CD4-positive, alpha-beta memory T cell (primary cell): ENCODE measurements at regions of chr14 and their contacts with region 1.

Region 1: GRCh38 chr14:54440873-54441868 is at the start of gene CNIH1:
- DNase-seq: peak; percentile 88 to 96 (median 93)
- H3K4me3 ChIP-seq: peak within 1 kb of the TSS; percentile 45 to 61
- H3K4me3 Mint-ChIP-seq: peak within 1 kb of the TSS; percentile 83 to 95 (median 92)
- H3K27ac ChIP-seq: peak within 1 kb of the TSS; percentile 55
- H3K27ac Mint-ChIP-seq: peak within 1 kb of the TSS; percentile 88 to 98 (median 94)
- H3K4me1 ChIP-seq: peaks cover 49% of the 10 kb centered on the region
- H3K4me1 Mint-ChIP-seq: peaks cover 29 to 55% (median 36%) of the 10 kb centered on the region in 4 donors
- H3K27me3 ChIP-seq: no peaks in the 10 kb centered on the region
- H3K27me3 Mint-ChIP-seq: peaks cover 1 to 2% of the 10 kb centered on the region in 2 donors
- total RNA-seq, gene CNIH1: 46.9 to 54.2 TPM

Region 2: GRCh38 chr14:53953002-53953827 is 488.0 kb before region 1 on chr14:
- CTCF ChIA-PET with region 1: no interaction called
- POLR2A ChIA-PET with region 1: no interaction called
- intact Hi-C with region 1: loop called (anchors 5 kb)
- DNase-seq: peak in 1 of 5 donors; percentile 14
- H3K4me3 ChIP-seq: peak overlapping the region in 1 of 2 donors; percentile 37
- H3K4me3 Mint-ChIP-seq: peak overlapping the region; percentile 77 to 90 (median 86)
- H3K27ac ChIP-seq: no peak overlapping the region
- H3K27ac Mint-ChIP-seq: no peak overlapping the region
- H3K4me1 ChIP-seq: peaks cover 33% of the 10 kb centered on the region
- H3K4me1 Mint-ChIP-seq: peaks cover 8 to 47% (median 23%) of the 10 kb centered on the region in 4 donors
- H3K27me3 ChIP-seq: peaks cover 8% of the 10 kb centered on the region
- H3K27me3 Mint-ChIP-seq: peaks cover 31 to 44% of the 10 kb centered on the region in 2 donors

Region 3: GRCh38 chr14:54366736-54367735 is 74.1 kb before region 1 on chr14:
- CTCF ChIA-PET with region 1: no interaction called
- POLR2A ChIA-PET with region 1: no interaction called
- intact Hi-C with region 1: loop called (anchors 1 kb)
- DNase-seq: peak; percentile 12 to 43 (median 22)
- H3K4me3 ChIP-seq: no peak overlapping the region
- H3K4me3 Mint-ChIP-seq: no peak overlapping the region
- H3K27ac ChIP-seq: no peak overlapping the region
- H3K27ac Mint-ChIP-seq: no peak overlapping the region
- H3K4me1 ChIP-seq: no peaks in the 10 kb centered on the region
- H3K4me1 Mint-ChIP-seq: no peaks in the 10 kb centered on the region
- H3K27me3 ChIP-seq: no peaks in the 10 kb centered on the region
- H3K27me3 Mint-ChIP-seq: peaks cover 11 to 15% of the 10 kb centered on the region in 2 donors

Region 4: DNA sequence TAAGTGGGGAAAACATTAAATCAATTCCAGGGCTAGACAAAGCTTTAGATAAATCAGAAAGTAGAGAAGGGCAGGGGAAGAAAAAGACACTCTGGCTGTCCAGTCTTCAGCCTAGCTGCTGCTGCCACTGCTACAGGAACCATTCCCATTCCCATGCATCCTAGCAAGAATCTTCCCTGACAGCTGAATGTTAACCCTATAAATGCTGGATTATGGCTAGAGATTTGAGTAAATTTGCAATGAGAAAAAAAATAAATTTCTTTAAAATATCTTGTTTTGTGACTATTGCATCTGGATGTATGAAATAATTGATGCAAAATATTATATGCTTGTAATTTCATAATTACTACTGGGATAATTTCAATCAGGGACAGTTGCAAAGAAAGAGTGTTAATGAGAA is 59.4 kb before region 1 on chr14:
- CTCF ChIA-PET with region 1: no interaction called
- POLR2A ChIA-PET with region 1: no interaction called
- intact Hi-C with region 1: no loop called
- DNase-seq: no peak
- H3K4me3 ChIP-seq: no peak overlapping the region
- H3K4me3 Mint-ChIP-seq: no peak overlapping the region
- H3K27ac ChIP-seq: no peak overlapping the region
- H3K27ac Mint-ChIP-seq: no peak overlapping the region
- H3K4me1 ChIP-seq: no peaks in the 10 kb centered on the region
- H3K4me1 Mint-ChIP-seq: no peaks in the 10 kb centered on the region
- H3K27me3 ChIP-seq: no peaks in the 10 kb centered on the region
- H3K27me3 Mint-ChIP-seq: peaks cover 7 to 24% of the 10 kb centered on the region in 2 donors

Region 5: DNA sequence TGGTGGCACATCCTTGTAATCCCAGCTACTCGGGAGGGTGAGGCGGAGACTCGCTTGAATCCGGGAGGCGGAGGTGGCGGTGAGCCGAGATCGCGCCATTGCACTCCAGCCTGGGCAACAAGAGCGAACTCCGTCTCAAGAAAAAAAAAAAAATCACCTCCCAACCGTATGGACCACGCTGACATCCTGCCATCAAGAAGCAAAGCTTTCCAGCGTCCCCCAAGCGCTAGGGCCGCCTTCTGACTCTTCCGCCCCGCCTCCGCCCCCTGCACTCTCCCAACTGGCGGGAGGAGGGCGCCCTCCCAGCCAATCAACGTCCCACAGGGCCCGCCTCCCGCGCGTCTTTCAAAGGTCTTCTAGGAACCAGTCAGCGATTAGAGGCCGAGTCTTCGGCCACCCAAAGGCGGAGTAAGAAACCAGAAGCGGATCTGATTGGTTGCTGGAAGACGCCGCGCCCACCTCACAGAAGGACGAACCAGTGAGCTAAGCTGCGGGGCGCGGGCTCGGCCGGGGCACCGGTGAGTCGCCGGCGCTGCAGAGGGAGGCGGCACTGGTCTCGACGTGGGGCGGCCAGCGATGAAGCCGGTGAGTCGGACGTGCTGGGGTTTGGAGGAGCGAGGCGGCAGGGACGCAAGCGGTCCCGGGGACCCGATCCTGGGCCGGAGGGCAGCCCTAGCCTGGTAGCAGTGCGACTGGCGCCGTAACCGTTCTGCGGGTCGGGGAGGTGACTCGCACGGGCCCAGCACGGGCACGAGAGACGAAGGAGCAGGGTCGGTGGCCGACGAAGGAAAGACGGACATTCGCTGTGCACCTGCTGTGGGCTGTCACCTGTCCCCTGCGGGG is 44.5 kb before region 1 on chr14 and contains the start of gene CDKN3:
- CTCF ChIA-PET with region 1: interaction called, 22 read pairs
- POLR2A ChIA-PET with region 1: interaction called, 6 read pairs
- intact Hi-C with region 1: loop called (anchors 1 kb)
- DNase-seq: peak; percentile 97
- H3K4me3 ChIP-seq: peak within 1 kb of the TSS; percentile 69 to 73
- H3K4me3 Mint-ChIP-seq: peak within 1 kb of the TSS; percentile 87 to 92 (median 89)
- H3K27ac ChIP-seq: peak within 1 kb of the TSS; percentile 51
- H3K27ac Mint-ChIP-seq: peak within 1 kb of the TSS; percentile 57 to 96 (median 86)
- H3K4me1 ChIP-seq: peaks cover 18% of the 10 kb centered on the region
- H3K4me1 Mint-ChIP-seq: peaks cover 10 to 23% (median 15%) of the 10 kb centered on the region in 4 donors
- H3K27me3 ChIP-seq: no peaks in the 10 kb centered on the region
- H3K27me3 Mint-ChIP-seq: peaks cover under 1 to 3% of the 10 kb centered on the region in 2 donors
- total RNA-seq, gene CDKN3: 1.1 to 1.6 TPM

Region 6: DNA sequence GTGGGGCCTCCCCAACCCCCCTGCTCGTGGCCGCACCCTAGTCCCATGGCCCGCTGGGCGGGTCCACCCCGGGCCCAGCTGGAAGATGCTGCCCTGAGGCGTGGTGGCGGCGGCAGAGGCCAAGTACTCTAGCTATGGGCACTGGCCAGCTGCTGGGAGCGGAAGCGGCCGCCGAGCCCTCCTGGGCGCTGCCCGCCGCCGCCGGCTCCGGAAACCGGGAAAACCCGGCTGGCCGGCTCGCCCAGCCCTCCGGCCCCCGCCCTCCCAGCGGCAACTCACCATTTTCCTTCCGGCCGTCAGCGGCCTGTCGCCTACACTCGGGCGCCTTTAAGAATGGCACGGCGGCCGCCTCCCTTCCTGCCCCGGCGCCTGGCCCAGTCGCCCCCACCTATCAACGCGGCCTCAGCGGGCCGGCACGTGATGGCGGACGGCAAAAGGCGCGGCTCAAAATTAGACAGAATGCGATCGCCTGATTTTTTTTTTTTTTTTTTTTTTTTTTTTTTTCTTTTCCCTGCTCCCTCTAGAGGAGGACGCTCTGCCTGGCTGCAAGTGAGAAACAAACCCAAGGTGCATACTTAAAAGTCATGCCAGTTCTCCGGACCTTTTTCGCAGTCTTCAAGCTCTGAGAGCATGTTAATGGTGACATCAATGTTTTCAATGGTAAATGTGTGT is 47.6 kb after region 1 on chr14 and contains the start of gene GMFB:
- CTCF ChIA-PET with region 1: interaction called, 3 read pairs
- POLR2A ChIA-PET with region 1: interaction called, 7 read pairs
- intact Hi-C with region 1: loop called (anchors 1 kb)
- DNase-seq: peak; percentile 84 to 88 (median 87)
- H3K4me3 ChIP-seq: peak within 1 kb of the TSS; percentile 50 to 66
- H3K4me3 Mint-ChIP-seq: peak within 1 kb of the TSS; percentile 85 to 97 (median 94)
- H3K27ac ChIP-seq: peak within 1 kb of the TSS; percentile 80
- H3K27ac Mint-ChIP-seq: peak within 1 kb of the TSS; percentile 89 to 99 (median 97)
- H3K4me1 ChIP-seq: peaks cover 57% of the 10 kb centered on the region
- H3K4me1 Mint-ChIP-seq: peaks cover 48 to 70% (median 57%) of the 10 kb centered on the region in 4 donors
- H3K27me3 ChIP-seq: no peaks in the 10 kb centered on the region
- H3K27me3 Mint-ChIP-seq: no peaks in the 10 kb centered on the region
- total RNA-seq, gene GMFB: 31.1 to 36.4 TPM

Region 7: DNA sequence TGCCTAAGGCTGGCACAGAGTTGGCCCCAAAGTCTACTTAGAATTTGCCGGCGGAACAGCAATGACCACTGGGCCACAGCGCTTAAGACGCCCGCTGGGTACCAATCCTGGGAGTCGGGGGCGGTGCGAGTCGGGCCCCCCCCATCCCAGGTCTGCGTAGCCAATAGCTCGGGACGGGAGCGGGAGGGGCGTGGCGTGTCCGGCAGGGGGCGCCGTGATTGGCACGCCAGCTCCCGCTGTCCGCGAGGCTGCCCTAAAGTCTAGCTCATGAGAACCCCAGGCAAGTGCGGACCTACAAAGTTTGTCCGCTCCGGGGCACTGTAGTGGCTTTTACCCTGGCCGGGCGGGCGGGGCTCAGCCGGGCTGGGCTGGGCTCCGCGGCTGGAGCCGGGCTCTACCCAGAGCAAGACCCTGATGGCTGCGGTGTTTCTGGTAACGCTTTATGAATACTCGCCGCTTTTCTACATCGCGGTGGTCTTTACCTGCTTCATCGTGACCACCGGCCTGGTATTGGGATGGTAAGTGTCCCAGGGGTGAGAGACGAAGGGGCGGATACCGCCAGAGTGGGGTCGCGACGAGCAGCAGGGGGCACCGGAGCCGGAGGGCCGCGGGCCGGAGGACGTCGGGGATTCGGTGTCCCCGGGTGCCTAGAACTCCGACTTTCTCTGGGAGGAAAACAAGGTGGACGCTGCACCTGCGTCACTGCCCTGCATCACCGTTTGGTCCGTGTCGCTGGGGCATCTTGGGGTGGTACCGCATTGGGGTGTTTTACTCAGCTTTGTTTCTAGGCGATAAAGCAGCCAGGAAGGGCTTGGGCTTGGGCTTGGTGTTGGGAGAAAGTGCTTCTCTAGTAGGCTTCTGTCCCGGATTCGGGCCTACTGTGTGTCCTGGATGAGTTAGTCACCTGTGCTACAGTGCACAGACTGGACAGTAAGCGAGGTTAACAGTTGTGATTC is 68.7 kb after region 1 on chr14 and contains the start of gene CGRRF1:
- CTCF ChIA-PET with region 1: interaction called, 5 read pairs
- POLR2A ChIA-PET with region 1: interaction called, 13 read pairs
- intact Hi-C with region 1: loop called (anchors 1 kb)
- DNase-seq: peak; percentile 93 to 95 (median 93)
- H3K4me3 ChIP-seq: peak within 1 kb of the TSS; percentile 86 to 87
- H3K4me3 Mint-ChIP-seq: peak within 1 kb of the TSS; percentile 93 to 99 (median 97)
- H3K27ac ChIP-seq: peak within 1 kb of the TSS; percentile 77
- H3K27ac Mint-ChIP-seq: peak within 1 kb of the TSS; percentile 84 to 97 (median 96)
- H3K4me1 ChIP-seq: peaks cover 41% of the 10 kb centered on the region
- H3K4me1 Mint-ChIP-seq: peaks cover 46 to 61% (median 50%) of the 10 kb centered on the region in 4 donors
- H3K27me3 ChIP-seq: no peaks in the 10 kb centered on the region
- H3K27me3 Mint-ChIP-seq: no peaks in the 10 kb centered on the region
- total RNA-seq, gene CGRRF1: 21.8 to 23.8 TPM

Region 8: GRCh38 chr14:54627540-54628363 is 186.6 kb after region 1 on chr14:
- CTCF ChIA-PET with region 1: no interaction called
- POLR2A ChIA-PET with region 1: no interaction called
- intact Hi-C with region 1: loop called (anchors 5 kb)
- DNase-seq: peak; percentile 44 to 70 (median 61)
- H3K4me3 ChIP-seq: peak overlapping the region; percentile 5 to 47
- H3K4me3 Mint-ChIP-seq: peak overlapping the region; percentile 65 to 86 (median 83)
- H3K27ac ChIP-seq: peak overlapping the region; percentile 67
- H3K27ac Mint-ChIP-seq: peak overlapping the region; percentile 87 to 96 (median 93)
- H3K4me1 ChIP-seq: peaks cover 48% of the 10 kb centered on the region
- H3K4me1 Mint-ChIP-seq: peaks cover 32 to 60% (median 47%) of the 10 kb centered on the region in 4 donors
- H3K27me3 ChIP-seq: no peaks in the 10 kb centered on the region
- H3K27me3 Mint-ChIP-seq: no peaks in the 10 kb centered on the region